Activated CD8-positive, alpha-beta T cell treated with anti-CD3 and anti-CD28 coated beads for 36 hours (primary cell): ENCODE measurements at regions of chr11 and their contacts with region 1.

Region 1: DNA sequence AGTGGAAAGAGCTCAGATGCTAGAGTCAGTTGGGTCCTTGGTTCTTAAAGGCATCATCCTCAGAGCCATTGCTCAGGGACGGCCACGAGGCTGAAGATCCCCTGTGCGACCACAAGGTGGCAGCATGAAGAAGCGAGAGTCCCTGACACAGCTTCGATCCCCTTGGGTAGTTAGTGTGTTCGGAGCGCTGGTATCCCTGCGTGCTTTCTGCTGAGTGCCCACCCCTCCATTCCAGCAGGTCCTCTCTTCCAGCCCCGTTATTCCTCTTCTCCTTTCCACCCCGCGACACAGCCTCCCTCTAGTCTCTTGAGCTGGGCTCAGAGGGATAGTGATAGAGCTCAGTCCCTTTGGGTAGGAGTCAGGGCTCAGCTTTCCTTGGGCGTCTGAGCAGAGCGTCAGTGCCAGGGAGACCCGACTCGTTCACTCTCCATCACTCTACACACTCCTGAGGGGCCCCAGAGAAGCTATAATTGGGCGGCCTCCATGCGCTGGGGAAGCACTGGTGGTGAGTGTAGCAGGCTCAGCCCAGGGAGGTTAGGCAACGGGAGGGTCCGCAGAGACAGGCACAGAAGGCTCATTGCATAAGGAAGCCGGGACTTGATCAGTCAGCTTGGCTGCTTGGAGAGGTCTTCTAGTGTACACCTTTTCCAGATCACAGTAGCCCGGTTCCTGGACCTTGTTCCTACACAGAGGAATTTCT is at the start of gene OR51D1:
- DNase-seq: peak; percentile 76
- ATAC-seq: peak; percentile 95
- H3K4me3 Mint-ChIP-seq: no peak within 1 kb of the TSS
- H3K27ac Mint-ChIP-seq: no peak within 1 kb of the TSS
- H3K4me1 Mint-ChIP-seq: no peaks in the 10 kb centered on the region
- H3K27me3 Mint-ChIP-seq: peaks cover 5% of the 10 kb centered on the region
- CTCF ChIP-seq: peak; percentile 90
- total RNA-seq, gene OR51D1: not detected

Region 2: GRCh38 chr11:4607781-4608666 is 29.1 kb before region 1 on chr11 and contains the start of gene TRIM68:
- CTCF ChIA-PET with region 1: interaction called, 17 read pairs
- POLR2A ChIA-PET with region 1: no interaction called
- intact Hi-C with region 1: no loop called
- DNase-seq: peak; percentile 95
- ATAC-seq: peak; percentile 100
- H3K4me3 Mint-ChIP-seq: peak within 1 kb of the TSS; percentile 90
- H3K27ac Mint-ChIP-seq: peak within 1 kb of the TSS; percentile 90
- H3K4me1 Mint-ChIP-seq: peaks cover 37% of the 10 kb centered on the region
- H3K27me3 Mint-ChIP-seq: no peaks in the 10 kb centered on the region
- CTCF ChIP-seq: no peak
- total RNA-seq, gene TRIM68: 10.2 to 11.4 TPM

Region 3: DNA sequence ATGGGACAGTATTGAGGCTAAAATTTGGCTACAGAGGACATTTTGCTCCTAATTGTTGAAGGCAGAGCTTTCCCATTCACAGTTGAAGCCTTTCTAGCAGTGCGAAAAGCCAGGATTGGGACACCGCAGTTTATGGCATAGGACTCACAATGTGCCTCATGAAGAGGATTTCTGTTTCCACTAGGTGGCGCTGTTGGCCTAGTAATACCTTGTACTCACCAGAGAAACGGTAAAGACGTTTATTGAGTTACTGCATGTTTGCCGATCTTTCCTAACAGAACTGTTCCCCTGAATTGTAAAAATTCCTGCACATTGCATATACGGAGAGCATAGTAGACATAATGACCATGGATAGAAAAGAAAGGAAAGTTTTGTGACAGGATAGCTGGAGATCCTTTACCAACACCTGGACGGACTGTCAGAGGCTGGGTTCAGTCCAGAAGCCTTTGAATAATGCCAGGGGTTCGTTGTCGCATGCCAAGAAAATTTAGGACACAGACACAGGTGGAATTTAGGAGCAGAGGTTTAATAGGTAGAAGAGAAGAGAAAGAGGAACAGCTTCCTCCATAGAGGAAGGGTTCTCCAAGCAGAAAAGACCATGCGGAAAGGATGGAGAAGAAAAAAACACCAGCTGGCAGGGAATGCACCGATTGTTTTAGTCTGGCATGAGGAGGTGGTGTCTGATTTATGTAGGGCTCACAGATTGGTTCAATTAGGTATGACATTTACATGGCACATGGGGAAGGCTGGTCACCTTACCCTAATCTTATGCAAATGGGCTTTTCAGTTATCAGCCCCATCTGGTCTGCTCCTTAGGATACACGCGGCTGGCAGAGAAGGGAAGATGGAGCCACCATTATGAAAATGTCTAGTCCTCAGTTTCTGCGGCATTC is 10.7 kb before region 1 on chr11:
- CTCF ChIA-PET with region 1: interaction called, 51 read pairs
- POLR2A ChIA-PET with region 1: no interaction called
- intact Hi-C with region 1: no loop called
- DNase-seq: peak; percentile 78
- ATAC-seq: peak; percentile 51
- H3K4me3 Mint-ChIP-seq: no peak overlapping the region
- H3K27ac Mint-ChIP-seq: no peak overlapping the region
- H3K4me1 Mint-ChIP-seq: no peaks in the 10 kb centered on the region
- H3K27me3 Mint-ChIP-seq: peaks cover 36% of the 10 kb centered on the region
- CTCF ChIP-seq: peak; percentile 77

Region 4: DNA sequence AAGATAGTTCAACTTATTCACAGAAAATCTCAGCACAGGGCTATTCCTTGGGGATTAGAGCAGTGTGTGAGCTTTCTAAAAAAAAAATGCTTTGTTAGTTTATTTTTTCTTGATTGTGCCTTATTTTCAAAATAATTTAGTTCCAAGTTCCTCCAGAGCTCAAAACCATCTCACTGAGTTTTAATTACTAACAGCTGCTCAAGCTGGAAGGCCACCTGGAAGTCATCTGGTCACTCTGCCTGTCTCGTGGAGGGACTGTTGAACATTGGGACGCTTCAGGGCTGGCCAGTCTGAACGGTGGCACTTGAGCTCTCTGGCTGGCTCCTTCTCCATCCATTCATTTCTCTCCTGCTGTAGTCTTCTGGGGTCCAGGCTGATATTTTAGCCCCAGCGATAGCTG is 10.7 kb after region 1 on chr11:
- CTCF ChIA-PET with region 1: interaction called, 11 read pairs
- POLR2A ChIA-PET with region 1: no interaction called
- intact Hi-C with region 1: no loop called
- DNase-seq: no peak
- ATAC-seq: no peak
- H3K4me3 Mint-ChIP-seq: no peak overlapping the region
- H3K27ac Mint-ChIP-seq: no peak overlapping the region
- H3K4me1 Mint-ChIP-seq: no peaks in the 10 kb centered on the region
- H3K27me3 Mint-ChIP-seq: peaks cover 5% of the 10 kb centered on the region
- CTCF ChIP-seq: no peak

Region 5: GRCh38 chr11:4763096-4763495 is 126.0 kb after region 1 on chr11:
- CTCF ChIA-PET with region 1: no interaction called
- POLR2A ChIA-PET with region 1: no interaction called
- intact Hi-C with region 1: no loop called
- DNase-seq: no peak
- ATAC-seq: no peak
- H3K4me3 Mint-ChIP-seq: no peak overlapping the region
- H3K27ac Mint-ChIP-seq: no peak overlapping the region
- H3K4me1 Mint-ChIP-seq: no peaks in the 10 kb centered on the region
- H3K27me3 Mint-ChIP-seq: no peaks in the 10 kb centered on the region
- CTCF ChIP-seq: no peak

Region 6: DNA sequence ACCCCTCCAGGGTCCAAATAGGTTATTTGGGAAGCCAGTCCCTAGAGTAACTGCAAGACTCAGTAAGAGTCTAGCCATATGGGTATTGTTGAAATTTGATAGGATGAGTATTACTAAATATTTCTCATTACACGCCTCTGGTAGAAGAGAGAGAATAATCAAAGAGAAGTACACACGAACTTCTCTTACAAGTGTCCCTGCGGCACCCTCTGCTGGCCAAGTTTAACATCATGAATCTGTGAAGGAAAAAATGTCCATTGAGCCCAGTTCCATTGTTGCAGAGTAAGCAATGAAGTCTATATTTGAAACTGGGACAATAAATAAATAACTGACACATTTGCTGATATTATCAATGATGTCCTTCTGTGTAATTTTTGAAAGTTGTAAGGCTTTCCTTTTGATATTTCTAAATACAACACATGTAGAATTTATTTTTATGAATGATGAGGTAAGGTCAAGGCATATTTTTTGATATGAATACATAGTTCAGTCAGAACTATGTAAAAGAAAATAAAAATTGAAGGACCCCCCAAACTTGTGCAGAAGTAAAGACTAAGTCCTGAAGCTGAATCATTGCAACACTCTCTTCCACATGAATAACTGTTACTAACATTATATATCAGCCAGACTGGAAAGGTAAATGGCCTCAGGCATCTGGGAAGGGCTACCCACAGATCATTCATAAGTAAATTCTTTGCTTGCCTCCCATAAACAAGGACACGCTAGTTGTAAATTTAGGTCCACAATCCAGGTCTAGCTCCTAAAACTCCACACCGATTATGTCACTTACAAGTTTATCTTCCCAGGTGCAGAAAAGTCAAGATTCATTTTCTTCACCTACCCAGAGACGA is 367.5 kb after region 1 on chr11:
- CTCF ChIA-PET with region 1: interaction called, 8 read pairs
- POLR2A ChIA-PET with region 1: no interaction called
- intact Hi-C with region 1: loop called (anchors 5 kb)
- DNase-seq: peak; percentile 59
- ATAC-seq: no peak
- H3K4me3 Mint-ChIP-seq: no peak overlapping the region
- H3K27ac Mint-ChIP-seq: no peak overlapping the region
- H3K4me1 Mint-ChIP-seq: no peaks in the 10 kb centered on the region
- H3K27me3 Mint-ChIP-seq: peaks cover 6% of the 10 kb centered on the region
- CTCF ChIP-seq: peak; percentile 22